ENCODE measurements at regions of chr1 and their contacts with region 1.

Region 1: DNA sequence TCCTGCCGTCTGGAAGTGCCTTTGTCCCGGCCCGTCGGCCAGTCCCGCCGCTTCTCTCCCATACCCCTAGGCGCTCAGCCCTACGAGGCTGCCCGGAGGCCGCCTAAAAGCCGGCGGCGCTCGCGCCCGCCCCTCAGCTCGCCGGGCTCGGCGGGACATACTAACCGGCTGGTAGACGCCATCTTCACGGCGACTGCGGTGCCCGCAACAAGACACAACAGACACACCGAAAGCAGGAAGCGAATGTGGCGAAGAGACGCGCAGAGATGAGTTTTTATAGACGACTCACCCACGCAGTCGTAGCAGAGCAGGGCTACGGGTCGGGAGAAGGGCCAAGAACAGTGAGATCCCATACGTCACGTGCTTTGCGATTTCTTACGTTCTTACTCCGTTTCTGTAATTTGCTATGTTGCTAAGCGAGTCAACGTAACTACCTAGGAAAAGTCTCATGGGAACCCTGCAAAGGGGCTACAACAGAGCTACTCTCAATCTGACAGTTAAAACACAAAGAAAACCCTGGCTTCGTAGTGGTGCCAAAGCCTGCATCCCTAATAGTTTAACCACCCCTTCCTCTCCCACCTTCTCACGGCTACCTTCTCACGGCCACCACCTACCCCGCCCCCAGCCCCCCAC is at the start of gene GTF2B:
- DNase-seq: peak; percentile 96
- total RNA-seq, gene GTF2B: 11.6 TPM

Region 2: DNA sequence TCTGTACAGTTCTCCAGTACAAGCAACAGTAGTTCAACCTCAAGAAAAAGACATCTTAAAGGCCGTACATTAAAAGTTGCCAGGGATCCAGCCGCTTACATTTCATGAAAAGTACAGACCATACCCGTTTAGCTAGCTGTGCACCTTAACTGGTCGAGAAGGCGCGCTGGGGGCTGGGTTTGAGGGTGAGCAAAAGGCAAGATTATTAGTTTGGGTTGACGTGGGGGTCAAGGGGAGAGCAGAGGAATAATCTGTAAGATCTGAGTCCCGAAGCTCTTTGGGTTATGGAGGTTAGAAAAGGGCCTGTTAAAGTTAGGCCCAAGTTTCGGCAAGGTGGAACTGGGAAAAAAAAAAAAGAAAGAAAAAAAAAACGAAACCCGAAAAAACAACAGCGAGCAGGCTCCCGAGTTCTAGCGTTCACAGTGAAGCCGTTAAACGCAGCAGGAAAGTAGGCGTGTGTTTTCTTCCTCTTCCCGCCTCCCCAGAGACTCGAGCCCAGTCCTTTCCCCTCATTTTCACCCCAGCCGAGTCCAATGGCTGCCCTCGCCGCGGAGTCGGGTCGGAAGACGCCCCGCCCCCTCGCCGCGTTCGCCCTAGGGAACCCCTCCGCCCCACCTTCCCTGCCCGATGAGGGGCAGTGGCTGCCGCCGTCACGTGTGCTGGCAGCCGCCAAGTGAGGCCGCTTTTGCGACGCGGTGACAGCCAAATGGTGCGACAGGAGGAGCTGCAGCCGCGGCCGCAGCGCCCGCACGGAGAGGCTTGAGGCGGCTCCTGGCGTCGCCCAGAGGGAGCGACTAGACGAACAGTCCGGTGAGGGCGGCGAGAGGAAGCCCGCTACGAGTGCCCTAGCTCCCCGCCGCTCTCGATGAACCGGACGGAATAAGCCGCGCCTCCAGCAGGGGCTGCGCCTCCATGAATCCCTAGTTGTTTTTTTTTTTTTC is 207.6 kb before region 1 on chr1 and contains the start of gene PKN2:
- intact Hi-C with region 1: loop called (anchors 5 kb)
- DNase-seq: peak; percentile 99
- total RNA-seq, gene PKN2: 27.0 TPM